Left cardiac atrium (tissue), 4 donors: ENCODE measurements at regions of chr12 and their contacts with region 1.

Region 1: GRCh38 chr12:503111-503761 is 43.5 kb downstream of the B4GALNT3 start:
- DNase-seq: no peak
- ATAC-seq: peak; percentile 38 to 66

Region 2: DNA sequence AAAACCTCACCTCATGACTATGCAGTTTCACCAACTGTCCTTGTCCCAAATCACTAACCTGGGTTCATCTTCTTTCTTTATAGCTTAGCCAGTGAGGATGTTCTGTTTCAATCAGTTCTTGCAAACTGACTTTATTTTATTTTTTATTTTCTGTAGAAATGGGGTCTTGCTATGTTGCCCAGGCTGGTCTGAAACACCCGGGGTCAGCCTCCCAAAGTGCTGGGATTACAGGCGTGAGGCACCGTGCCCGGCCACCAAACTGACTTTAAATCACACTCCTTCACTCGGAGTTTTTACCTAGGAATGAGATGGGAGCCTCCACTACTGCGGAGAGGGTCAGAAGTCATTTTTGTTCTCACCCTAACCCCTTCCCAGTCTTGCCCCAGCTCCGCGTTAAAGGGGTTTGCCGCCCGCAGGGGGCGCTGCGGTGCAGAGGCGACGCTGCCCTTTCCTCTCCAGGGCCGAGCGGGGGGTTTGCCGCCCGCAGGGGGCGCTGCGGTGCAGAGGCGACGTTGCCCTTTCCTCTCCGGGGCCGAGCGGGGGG is 50.5 kb before region 1 on chr12:
- intact Hi-C with region 1: loop called (anchors 2 to 10 kb)
- DNase-seq: no peak
- ATAC-seq: peak in 1 of 2 donors; percentile 9

Region 3: GRCh38 chr12:459430-460258 is 43.6 kb before region 1 on chr12 and contains the start of gene B4GALNT3:
- intact Hi-C with region 1: loop called in 1 of 2 experiments (anchors 10 kb)
- DNase-seq: peak; percentile 52
- ATAC-seq: peak; percentile 76 to 79
- total RNA-seq, gene B4GALNT3: 20.9 to 22.1 TPM

Region 4: GRCh38 chr12:546921-547845 is 43.9 kb after region 1 on chr12:
- intact Hi-C with region 1: loop called in 1 of 2 experiments (anchors 5 kb)
- DNase-seq: peak; percentile 72
- ATAC-seq: peak; percentile 69 to 78

Region 5: GRCh38 chr12:810671-811415 is 307.6 kb after region 1 on chr12:
- intact Hi-C with region 1: no loop called
- DNase-seq: no peak
- ATAC-seq: no peak